Colonic mucosa (tissue), 4 donors: ENCODE measurements at regions of chr5 and their contacts with region 1.

Region 1: DNA sequence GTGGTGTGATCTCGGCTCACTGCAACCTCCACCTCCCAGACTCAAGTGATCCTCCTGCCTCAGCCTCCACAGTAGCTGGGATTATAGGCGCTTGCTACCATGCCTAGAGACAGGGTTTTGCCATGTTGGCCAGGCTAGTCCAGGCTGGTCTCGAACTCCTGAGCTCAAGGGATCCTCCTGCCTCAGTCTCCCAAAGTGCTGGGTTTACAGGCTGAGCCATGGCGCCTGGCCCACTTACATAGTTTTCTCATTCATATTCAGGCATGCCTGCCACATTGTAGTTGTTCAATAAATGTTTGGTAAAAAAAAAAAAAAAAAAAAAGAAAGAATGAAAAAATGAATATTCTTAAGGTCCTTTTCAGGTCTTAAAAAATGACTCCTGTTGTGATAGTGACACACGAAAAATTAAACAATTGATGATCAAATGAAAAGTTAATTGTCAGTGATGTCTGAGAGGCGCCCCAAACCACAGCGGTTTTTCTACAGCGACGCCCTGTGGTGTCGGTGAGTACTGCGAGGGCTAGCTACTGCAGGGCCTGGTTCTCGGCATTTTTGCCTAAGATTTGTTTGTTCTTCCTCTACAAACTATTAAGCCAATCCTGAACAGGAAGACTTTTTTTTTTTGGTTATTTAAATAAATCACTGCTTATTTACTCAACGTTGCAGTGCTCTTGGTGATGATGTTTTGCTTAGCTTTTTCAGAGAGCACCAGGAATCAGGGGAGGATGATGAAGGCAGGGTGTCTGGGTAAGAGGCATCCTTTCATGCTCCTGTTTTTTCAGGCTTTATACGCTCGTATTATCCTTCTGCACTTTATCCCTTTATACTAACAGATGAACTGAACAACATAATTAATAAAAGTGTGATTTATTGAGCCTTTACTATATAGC is 67.0 kb upstream of the DPYSL3 start:
- DNase-seq: peak; percentile 69
- H3K4me3 ChIP-seq: no peak overlapping the region
- H3K27ac ChIP-seq: no peak overlapping the region
- H3K4me1 ChIP-seq: no peaks in the 10 kb centered on the region
- H3K27me3 ChIP-seq: no peaks in the 10 kb centered on the region
- CTCF ChIP-seq: peak; percentile 83

Region 2: DNA sequence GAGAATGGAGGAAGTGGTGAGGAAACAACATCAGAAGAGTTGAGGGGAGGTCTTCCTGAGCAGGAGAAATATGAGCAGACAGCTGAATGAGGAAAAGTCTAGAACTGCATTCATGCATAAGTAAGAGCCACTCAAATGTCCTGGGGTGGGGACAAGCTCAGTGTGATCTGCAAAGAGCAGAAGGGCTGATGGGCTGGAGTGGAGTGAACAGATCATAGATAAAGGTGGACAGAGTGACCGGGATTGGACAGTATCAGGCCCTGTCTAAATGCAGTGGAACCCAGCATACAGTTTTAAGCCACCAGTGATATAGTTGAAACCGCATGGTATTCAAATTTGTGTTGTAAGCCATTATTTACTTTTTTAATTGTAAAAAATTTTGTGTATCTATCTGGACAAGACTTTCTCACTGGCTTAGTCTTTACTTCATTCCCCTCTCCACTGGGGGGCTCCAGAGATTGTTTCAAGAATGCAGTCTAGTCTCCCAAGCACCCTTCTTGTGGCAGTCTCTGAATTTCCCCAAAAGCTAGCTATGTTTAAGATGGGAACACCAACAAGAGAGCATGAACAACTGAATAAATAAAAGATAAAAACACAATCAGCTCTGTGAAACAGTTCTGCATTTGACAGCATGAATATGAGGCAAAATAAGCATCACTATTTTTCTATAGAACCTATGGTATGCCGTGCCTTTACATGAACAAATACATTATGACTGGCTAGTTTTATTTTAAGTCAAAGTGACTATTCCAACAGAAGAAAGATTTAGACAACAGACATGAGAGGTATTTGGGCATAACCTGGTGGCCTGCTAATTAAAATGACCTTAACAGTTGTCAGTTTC is 352.7 kb before region 1 on chr5:
- intact Hi-C with region 1: loop called (anchors 5 kb)
- DNase-seq: peak; percentile 38
- H3K4me3 ChIP-seq: no peak overlapping the region
- H3K27ac ChIP-seq: no peak overlapping the region
- H3K4me1 ChIP-seq: no peaks in the 10 kb centered on the region
- H3K27me3 ChIP-seq: no peaks in the 10 kb centered on the region
- CTCF ChIP-seq: peak; percentile 62

Region 3: DNA sequence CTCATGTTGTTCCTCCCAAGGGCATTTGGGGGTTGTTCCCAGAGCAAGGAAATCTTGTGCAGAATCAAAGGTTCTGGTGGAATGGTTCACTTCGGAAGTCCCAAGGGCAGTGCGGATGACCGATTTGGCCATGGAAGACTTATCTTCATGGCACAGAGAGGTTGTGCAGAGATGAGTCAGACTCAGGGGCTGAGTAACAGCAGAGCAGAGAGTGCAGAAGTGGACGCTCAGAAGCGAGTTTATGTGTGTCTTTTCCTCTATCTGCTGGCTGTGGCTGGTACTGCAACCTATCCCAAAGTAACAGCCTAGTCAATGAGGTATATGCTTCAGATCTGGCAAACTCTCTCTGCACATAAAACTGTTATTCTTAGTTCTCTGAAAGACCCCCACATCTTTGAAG is 185.1 kb before region 1 on chr5:
- intact Hi-C with region 1: loop called (anchors 5 kb)
- DNase-seq: peak; percentile 22
- H3K4me3 ChIP-seq: no peak overlapping the region
- H3K27ac ChIP-seq: no peak overlapping the region
- H3K4me1 ChIP-seq: no peaks in the 10 kb centered on the region
- H3K27me3 ChIP-seq: no peaks in the 10 kb centered on the region
- CTCF ChIP-seq: peak; percentile 40

Region 4: GRCh38 chr5:147453875-147454814 is 122.7 kb before region 1 on chr5:
- intact Hi-C with region 1: loop called (anchors 5 kb)
- DNase-seq: peak; percentile 87
- H3K4me3 ChIP-seq: peak overlapping the region; percentile 44
- H3K27ac ChIP-seq: peak overlapping the region; percentile 75
- H3K4me1 ChIP-seq: no peaks in the 10 kb centered on the region
- H3K27me3 ChIP-seq: peaks cover 21% of the 10 kb centered on the region
- CTCF ChIP-seq: peak; percentile 71

Region 5: GRCh38 chr5:147675168-147675567 is 98.3 kb after region 1 on chr5:
- intact Hi-C with region 1: no loop called
- DNase-seq: no peak
- H3K4me3 ChIP-seq: no peak overlapping the region
- H3K27ac ChIP-seq: no peak overlapping the region
- H3K4me1 ChIP-seq: no peaks in the 10 kb centered on the region
- H3K27me3 ChIP-seq: no peaks in the 10 kb centered on the region
- CTCF ChIP-seq: no peak